Spleen (tissue), 13 donors: ENCODE measurements at regions of chr1 and their contacts with region 1.

Region 1: DNA sequence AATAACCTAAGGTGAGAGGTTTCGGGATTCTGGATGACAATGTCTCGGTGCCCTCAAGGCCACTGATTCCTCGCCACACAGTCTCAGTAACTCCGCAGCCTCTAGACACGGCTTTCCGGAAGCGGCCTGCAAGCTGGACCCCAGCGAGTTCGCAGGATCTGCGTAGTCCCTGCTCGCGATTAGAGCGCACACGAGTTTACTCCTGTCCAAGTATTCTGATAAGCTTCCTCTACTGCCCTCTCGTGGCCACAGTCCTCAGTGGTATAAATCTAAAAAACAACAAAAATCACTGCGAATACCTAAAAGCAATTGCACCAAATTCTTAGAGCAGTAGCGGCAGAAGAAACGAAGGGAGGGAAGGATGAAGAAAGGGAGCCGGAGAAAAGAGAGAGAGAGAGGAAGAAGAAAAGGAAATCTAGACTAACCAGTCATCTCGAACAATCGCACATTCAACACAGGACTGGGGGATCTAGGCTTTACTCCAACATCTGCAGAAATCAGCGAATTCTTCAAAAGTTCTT is 1.1 kb upstream of the PLXNA2 start:
- DNase-seq: peak; percentile 92
- H3K4me3 ChIP-seq: peak overlapping the region; percentile 60 to 87 (median 70)
- H3K27ac ChIP-seq: peak overlapping the region; percentile 6 to 90 (median 82)
- H3K4me1 ChIP-seq: peaks cover 0 to 42% (median 23%) of the 10 kb centered on the region in 6 donors
- H3K27me3 ChIP-seq: peaks cover 0 to 46% (median 6%) of the 10 kb centered on the region in 7 donors
- CTCF ChIP-seq: peak; percentile 45 to 90 (median 77)
- POLR2A ChIP-seq: no peak

Region 2: DNA sequence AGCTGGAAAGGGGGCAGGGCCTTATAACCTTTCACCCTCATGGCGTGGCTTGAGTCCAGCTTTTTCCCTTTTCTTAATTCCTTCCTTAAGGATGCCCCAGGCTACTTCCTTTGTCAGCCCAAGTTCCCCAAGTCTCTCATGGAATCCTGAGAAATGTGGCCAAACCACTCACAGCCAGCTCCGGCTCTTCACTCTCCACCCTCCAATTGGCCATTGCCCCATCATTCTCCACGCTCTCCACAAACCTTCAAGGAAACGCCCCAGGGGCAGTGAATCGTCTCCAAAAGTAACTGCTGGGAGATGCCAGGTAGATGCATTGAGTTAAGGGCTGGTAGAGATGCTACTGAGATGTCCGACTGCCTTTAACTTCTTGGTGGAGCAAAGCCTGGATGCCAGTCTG is 220.8 kb before region 1 on chr1:
- intact Hi-C with region 1: loop called (anchors 5 kb)
- DNase-seq: no peak
- H3K4me3 ChIP-seq: no peak overlapping the region
- H3K27ac ChIP-seq: no peak overlapping the region
- H3K4me1 ChIP-seq: no peaks in the 10 kb centered on the region
- H3K27me3 ChIP-seq: peaks cover 0 to 5% (median 0%) of the 10 kb centered on the region in 7 donors
- CTCF ChIP-seq: no peak
- POLR2A ChIP-seq: no peak

Region 3: GRCh38 chr1:208374391-208374941 is 129.2 kb after region 1 on chr1:
- intact Hi-C with region 1: no loop called
- DNase-seq: no peak
- H3K4me3 ChIP-seq: no peak overlapping the region
- H3K27ac ChIP-seq: no peak overlapping the region
- H3K4me1 ChIP-seq: no peaks in the 10 kb centered on the region
- H3K27me3 ChIP-seq: no peaks in the 10 kb centered on the region
- CTCF ChIP-seq: no peak
- POLR2A ChIP-seq: no peak

Region 4: DNA sequence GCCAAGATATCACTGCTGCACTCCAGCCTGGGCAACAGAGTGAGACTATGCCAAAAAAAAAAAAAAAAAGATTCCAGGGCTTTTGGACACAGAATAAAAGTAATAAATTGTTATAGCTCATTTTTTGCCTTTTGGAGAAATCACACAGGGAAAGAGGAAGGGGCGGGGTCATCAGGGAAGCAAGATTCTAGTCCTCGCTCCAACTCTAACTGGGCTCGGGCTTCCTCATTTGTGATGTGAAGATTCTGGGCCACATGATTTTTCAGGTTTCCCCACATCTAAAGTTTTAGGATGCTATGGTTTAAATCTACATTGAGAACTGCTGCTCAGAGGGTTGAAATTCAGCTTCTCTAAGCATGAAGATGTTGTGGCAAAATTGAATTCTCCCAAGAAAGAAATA is 178.3 kb after region 1 on chr1:
- intact Hi-C with region 1: no loop called
- DNase-seq: no peak
- H3K4me3 ChIP-seq: no peak overlapping the region
- H3K27ac ChIP-seq: no peak overlapping the region
- H3K4me1 ChIP-seq: no peaks in the 10 kb centered on the region
- H3K27me3 ChIP-seq: no peaks in the 10 kb centered on the region
- CTCF ChIP-seq: no peak
- POLR2A ChIP-seq: no peak